H1 (cell line): ENCODE measurements at regions of chr11 and their contacts with region 1.

Region 1: DNA sequence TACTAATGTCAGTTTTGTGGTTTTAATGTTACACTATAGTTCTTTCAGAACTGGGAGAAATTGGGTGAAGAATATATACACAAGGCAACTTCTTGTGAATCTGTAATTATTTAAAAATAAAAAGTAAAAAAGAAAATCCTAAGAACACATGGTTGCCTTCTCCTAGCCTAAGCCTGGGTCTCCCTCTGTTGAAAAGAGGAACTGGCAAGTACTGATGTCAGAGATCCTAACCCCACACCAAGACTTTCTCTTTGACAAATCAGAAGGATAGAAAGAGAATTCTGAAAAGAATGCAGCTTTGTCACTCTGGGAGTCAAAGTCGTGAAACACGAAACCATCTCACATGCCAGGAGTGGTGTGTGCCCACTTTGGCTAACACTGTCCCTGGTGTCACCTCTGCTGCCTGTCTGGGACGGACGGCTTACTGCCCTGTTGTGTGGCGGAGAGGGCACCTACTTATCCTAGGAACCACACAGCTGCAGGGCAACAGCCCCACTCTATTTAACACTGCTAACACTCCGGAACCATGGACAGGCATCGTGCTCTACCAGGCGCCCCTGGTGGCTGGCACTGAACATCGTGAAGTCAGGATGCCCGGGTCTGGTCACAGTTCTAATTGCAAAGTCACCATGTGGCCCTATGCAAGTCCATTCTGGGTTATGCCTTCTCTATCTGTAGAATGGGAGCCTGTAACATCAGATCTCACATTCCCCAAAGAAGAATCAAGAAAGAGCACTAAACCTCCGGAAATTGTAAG is 108.7 kb upstream of the CD82 start:
- DNase-seq: peak in 1 of 2 experiments; percentile 58
- H3K4me3 ChIP-seq: no peak overlapping the region
- H3K27ac ChIP-seq: no peak overlapping the region
- H3K4me1 ChIP-seq: peaks cover 0 to 2% (median 0%) of the 10 kb centered on the region in 4 experiments; a peak in 1 of 7 replicates
- H3K27me3 ChIP-seq: no peaks in the 10 kb centered on the region
- CTCF ChIP-seq: peak; percentile 45 to 75 (median 71); a peak in 3 of 4 replicates
- EP300 ChIP-seq: no peak
- POLR2A ChIP-seq: no peak
- RAD21 ChIP-seq: peak; percentile 18 to 49; a peak in 2 of 4 replicates

Region 2: GRCh38 chr11:44416776-44417175 is 39.9 kb before region 1 on chr11:
- CTCF ChIA-PET with region 1: interaction called, 10 read pairs
- POLR2A ChIA-PET with region 1: no interaction called
- DNase-seq: no peak
- H3K4me3 ChIP-seq: no peak overlapping the region
- H3K27ac ChIP-seq: no peak overlapping the region
- H3K4me1 ChIP-seq: no peaks in the 10 kb centered on the region
- H3K27me3 ChIP-seq: peaks cover 0 to 2% (median 0%) of the 10 kb centered on the region in 4 experiments; a peak in 1 of 7 replicates
- CTCF ChIP-seq: no peak
- EP300 ChIP-seq: no peak
- POLR2A ChIP-seq: no peak
- RAD21 ChIP-seq: no peak

Region 3: DNA sequence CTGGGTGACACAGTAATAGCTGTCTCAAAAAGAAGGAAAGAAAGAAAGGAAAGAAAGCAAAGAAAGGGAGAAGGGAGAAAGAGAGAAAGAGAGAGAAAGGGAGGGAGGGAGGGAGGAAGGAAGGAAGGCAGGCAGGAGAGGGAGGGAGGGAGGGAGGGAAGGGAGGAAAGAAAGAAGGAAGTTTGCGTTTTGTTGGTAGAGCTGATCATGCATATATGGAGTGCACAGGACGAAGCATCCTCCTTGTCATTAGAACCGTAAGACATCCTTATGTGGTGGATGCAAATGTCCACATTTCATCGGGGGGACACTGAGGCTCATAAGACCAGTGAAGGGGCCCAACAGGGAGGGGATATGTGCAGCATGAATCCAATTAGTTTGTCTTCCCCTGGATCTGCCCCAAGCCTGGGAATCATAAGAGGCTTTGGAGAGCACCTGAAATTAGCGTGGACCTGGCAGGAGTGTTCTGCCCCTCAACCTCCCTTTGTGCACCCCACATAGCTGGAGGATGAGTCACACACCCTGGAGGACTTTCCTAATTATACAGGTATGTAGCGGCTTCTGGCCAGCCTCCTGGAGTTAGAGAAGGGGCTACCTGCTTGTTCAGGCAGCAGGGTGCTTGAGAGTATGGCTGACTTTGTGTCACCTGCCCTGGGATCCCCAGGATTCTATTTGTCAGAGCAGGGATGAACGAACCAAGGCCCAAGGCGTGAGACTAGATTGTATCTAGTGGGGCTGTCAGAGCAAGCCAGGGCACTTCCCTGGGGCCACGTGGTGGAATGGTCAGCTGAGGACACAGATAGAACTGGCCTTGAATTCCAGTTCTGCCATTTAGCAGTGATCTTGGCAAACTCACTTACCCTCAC is 11.0 kb before region 1 on chr11:
- CTCF ChIA-PET with region 1: interaction called, 11 read pairs
- POLR2A ChIA-PET with region 1: no interaction called
- DNase-seq: peak in 1 of 2 experiments; percentile 59
- H3K4me3 ChIP-seq: no peak overlapping the region
- H3K27ac ChIP-seq: no peak overlapping the region
- H3K4me1 ChIP-seq: peaks cover 3 to 14% (median 7%) of the 10 kb centered on the region in 4 experiments; a peak in 5 of 7 replicates
- H3K27me3 ChIP-seq: peaks cover 0 to 2% (median 0%) of the 10 kb centered on the region in 4 experiments; a peak in 2 of 7 replicates
- CTCF ChIP-seq: no peak
- EP300 ChIP-seq: no peak
- POLR2A ChIP-seq: no peak
- RAD21 ChIP-seq: no peak